ENCODE measurements at regions of chr17 and their contacts with region 1.

Region 1: GRCh38 chr17:61285526-61286320 is 113.9 kb upstream of the TBX2 start:
- DNase-seq: peak; percentile 35
- H3K4me3 Mint-ChIP-seq: no peak overlapping the region
- H3K27ac Mint-ChIP-seq: no peak overlapping the region
- H3K4me1 Mint-ChIP-seq: peaks cover 11% of the 10 kb centered on the region
- H3K27me3 Mint-ChIP-seq: no peaks in the 10 kb centered on the region

Region 2: GRCh38 chr17:61057257-61057656 is 228.5 kb before region 1 on chr17:
- CTCF ChIA-PET with region 1: no interaction called
- POLR2A ChIA-PET with region 1: no interaction called
- intact Hi-C with region 1: loop called (anchors 10 kb)
- DNase-seq: no peak
- H3K4me3 Mint-ChIP-seq: no peak overlapping the region
- H3K27ac Mint-ChIP-seq: no peak overlapping the region
- H3K4me1 Mint-ChIP-seq: peaks cover 8% of the 10 kb centered on the region
- H3K27me3 Mint-ChIP-seq: no peaks in the 10 kb centered on the region

Region 3: DNA sequence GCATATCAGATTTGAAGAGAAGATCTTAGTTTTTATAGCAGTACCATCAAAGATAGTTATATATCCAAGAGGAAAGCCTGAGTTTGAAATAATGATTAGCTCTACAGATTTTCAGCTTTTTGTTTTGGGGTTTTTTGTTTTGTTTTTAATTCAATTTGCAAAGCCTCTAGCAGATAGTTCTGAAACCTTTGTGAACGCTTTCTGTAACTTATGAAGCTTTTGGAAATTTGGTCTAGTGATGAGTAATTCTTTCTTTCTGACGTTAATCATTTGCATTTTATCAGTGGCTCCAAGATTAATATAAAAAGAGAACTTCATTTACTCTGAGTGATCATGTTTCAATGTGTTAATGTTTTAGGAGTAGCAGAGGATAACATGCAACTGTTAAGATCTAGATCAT is 46.5 kb before region 1 on chr17:
- CTCF ChIA-PET with region 1: no interaction called
- POLR2A ChIA-PET with region 1: no interaction called
- intact Hi-C with region 1: loop called (anchors 1 kb)
- DNase-seq: no peak
- H3K4me3 Mint-ChIP-seq: no peak overlapping the region
- H3K27ac Mint-ChIP-seq: peak overlapping the region; percentile 43
- H3K4me1 Mint-ChIP-seq: peaks cover 20% of the 10 kb centered on the region
- H3K27me3 Mint-ChIP-seq: no peaks in the 10 kb centered on the region

Region 4: DNA sequence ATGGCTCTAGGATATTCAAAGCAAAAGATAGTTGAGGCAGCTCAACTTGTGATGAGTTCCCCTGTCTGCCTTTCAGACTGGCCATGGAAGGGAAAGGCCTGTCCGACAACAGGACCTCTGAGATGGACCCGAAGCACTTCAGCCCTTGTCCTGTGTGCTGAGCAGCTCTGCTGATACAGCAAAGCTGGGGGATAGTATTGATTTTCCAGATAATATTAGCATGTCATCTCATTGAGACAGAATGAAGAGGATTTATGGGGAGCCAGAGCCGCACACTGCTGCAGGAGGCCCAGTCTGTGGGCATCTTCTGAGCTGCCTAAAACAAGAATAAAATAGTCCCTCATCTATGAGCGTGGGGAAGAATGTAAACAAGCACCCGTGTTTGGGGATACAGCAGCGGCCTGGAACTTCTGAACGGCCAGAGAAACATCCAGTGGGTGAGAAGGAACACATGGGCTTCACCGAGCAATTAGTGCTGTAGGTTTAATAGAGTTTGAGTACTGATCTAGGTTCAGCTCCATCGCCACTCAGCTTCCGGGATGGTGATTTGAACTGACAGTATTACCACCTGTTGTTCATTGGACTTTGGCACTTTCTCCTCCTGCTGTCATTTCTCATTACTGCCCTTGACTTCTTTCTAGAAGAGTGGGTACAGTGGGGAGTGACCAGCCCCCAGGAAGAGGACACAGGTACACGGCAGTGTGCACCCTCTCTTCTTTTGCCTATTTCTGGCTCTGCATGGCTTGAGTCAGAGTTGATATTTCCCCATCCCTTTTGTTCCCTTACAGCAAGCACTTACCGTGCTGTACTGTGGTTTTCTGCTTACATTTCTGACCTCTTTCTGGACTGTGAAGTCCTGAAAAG is 17.5 kb after region 1 on chr17:
- CTCF ChIA-PET with region 1: no interaction called
- POLR2A ChIA-PET with region 1: no interaction called
- intact Hi-C with region 1: no loop called
- DNase-seq: no peak
- H3K4me3 Mint-ChIP-seq: no peak overlapping the region
- H3K27ac Mint-ChIP-seq: no peak overlapping the region
- H3K4me1 Mint-ChIP-seq: no peaks in the 10 kb centered on the region
- H3K27me3 Mint-ChIP-seq: no peaks in the 10 kb centered on the region